ENCODE measurements at regions of chr1 and their contacts with region 1.

Region 1: GRCh38 chr1:67853704-67854103 is 20.4 kb upstream of the GNG12 start:
- DNase-seq: peak in 5 of 6 donors; percentile 35 to 73 (median 43)
- ATAC-seq: peak in 3 of 4 donors; percentile 75 to 86 (median 82)
- H3K4me3 ChIP-seq: no peak overlapping the region
- H3K27ac ChIP-seq: no peak overlapping the region
- H3K4me1 ChIP-seq: peaks cover 0 to 11% (median 9%) of the 10 kb centered on the region in 3 donors
- H3K27me3 ChIP-seq: no peaks in the 10 kb centered on the region
- CTCF ChIP-seq: peak in 3 of 4 donors; percentile 49 to 58 (median 56)

Region 2: GRCh38 chr1:67599085-67599484 is 254.6 kb before region 1 on chr1:
- intact Hi-C with region 1: no loop called
- DNase-seq: no peak
- ATAC-seq: peak in 1 of 4 donors; percentile 31
- H3K4me3 ChIP-seq: no peak overlapping the region
- H3K27ac ChIP-seq: no peak overlapping the region
- H3K4me1 ChIP-seq: no peaks in the 10 kb centered on the region
- H3K27me3 ChIP-seq: no peaks in the 10 kb centered on the region
- CTCF ChIP-seq: no peak

Region 3: DNA sequence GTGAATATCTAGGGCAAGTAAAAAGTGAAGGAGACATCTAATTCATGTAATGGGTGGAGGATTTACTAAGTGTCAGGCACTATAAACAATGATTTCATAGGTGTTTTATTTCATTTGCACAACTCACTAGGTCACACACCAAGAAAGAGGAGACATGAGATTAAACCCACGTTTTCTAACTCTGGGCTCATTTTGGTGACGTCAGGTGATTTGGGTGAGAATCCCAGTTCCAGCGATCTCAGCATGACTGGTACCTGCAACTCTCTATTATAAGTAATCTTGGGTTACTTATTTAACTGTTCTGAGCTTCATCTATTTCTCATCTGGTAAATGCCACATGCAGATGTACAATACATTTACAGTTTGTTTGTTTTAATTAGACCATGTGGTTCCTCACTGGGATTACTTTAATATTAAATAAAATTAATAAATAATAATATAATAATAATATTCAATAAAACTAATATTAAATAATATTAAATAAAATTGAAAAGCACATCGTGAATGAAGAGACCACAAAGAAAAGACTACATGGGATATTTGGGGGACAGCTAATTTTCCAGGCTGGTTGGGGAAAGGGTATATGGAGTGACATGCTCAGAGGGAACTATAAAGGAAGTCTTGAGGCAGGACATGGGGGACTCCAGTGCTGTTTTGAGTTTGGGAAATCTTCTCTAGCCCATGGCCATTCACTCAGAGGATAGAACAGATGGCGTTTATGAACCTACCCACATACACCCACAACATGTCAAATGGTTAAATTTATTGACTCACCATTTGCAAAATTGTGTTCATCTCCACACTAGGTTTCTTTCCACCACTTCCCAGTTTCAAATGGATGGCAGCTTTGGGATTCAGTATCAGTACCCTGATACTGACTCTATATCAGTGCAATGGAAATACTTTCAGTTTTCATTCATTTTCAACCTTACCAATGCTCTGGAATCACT is 171.0 kb after region 1 on chr1:
- intact Hi-C with region 1: no loop called
- DNase-seq: no peak
- ATAC-seq: no peak
- H3K4me3 ChIP-seq: no peak overlapping the region
- H3K27ac ChIP-seq: no peak overlapping the region
- H3K4me1 ChIP-seq: no peaks in the 10 kb centered on the region
- H3K27me3 ChIP-seq: no peaks in the 10 kb centered on the region
- CTCF ChIP-seq: no peak

Region 4: DNA sequence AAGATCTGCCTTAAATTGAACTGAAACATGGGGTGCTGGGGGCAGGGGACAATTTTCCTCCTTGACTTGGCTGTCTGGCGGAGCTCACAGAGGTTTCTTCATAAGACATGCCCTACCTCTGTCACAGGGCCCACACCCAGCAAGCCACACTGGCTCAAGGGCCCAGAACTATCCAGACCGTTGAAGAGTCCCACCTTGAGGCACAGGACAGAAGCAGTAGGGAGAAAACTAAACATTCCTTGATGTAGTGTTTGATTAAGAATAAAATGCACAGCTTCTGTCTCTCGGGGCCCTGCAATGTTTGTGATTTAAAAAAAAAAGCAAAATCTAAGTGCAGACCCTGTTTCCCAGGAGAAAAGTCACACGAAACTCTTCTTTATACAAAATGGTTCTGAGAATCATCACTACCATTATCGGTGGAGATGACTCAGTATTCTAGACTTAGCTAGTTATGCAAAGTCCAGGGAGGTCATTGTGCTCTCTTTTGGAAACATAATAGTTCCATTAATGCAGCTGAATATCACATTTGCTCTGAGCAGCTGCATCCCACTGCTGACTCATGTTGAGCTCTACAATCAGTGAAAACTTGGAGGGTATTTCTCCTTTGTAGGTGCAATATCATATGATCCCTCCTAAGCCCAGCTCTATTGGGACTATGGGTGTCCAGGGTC is 250.3 kb after region 1 on chr1:
- intact Hi-C with region 1: loop called in 1 of 3 experiments (anchors 10 kb)
- DNase-seq: no peak
- ATAC-seq: peak in 2 of 4 donors; percentile 30 to 65
- H3K4me3 ChIP-seq: no peak overlapping the region
- H3K27ac ChIP-seq: no peak overlapping the region
- H3K4me1 ChIP-seq: no peaks in the 10 kb centered on the region
- H3K27me3 ChIP-seq: no peaks in the 10 kb centered on the region
- CTCF ChIP-seq: no peak

Region 5: GRCh38 chr1:68111519-68112436 is 258.1 kb after region 1 on chr1:
- intact Hi-C with region 1: loop called in 2 of 3 experiments (anchors 5 to 10 kb)
- DNase-seq: peak in 5 of 6 donors; percentile 29 to 69 (median 61)
- ATAC-seq: peak; percentile 70 to 91 (median 91)
- H3K4me3 ChIP-seq: no peak overlapping the region
- H3K27ac ChIP-seq: no peak overlapping the region
- H3K4me1 ChIP-seq: no peaks in the 10 kb centered on the region
- H3K27me3 ChIP-seq: no peaks in the 10 kb centered on the region
- CTCF ChIP-seq: peak in 3 of 4 donors; percentile 11 to 30 (median 13)

Region 6: DNA sequence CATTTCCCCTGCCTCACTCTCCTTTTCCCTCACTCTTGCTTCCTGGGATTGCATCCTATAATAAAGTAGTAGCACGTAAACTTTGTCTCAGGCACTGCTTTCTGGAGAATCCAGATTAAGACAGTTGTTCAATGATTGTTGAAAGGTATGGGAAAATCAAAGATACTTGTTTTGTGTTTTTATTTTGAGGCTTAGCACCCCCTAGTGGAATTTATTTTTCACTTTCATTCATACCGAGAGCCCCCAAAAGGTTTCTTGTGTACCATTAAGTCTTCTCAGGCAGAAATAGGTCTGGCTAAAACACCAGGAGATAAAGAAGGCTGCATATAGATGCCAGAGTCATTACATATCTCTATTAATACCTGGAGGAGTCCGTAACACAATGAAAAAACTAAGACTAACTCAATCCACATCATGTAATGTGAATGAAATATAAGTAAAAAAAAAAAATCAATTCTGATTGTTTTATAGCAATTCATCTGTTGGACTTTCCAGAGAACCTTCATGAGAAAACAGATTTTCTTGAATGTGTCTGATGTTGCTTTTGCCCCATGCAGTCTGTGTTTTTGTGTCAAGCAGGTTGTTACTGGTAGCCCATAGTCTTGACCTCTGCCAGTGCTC is 492.6 kb after region 1 on chr1:
- intact Hi-C with region 1: loop called in 2 of 3 experiments (anchors 5 to 10 kb)
- DNase-seq: no peak
- ATAC-seq: peak in 1 of 4 donors; percentile 30
- H3K4me3 ChIP-seq: no peak overlapping the region
- H3K27ac ChIP-seq: no peak overlapping the region
- H3K4me1 ChIP-seq: no peaks in the 10 kb centered on the region
- H3K27me3 ChIP-seq: no peaks in the 10 kb centered on the region
- CTCF ChIP-seq: peak in 3 of 4 donors; percentile 31 to 37 (median 32)